ENCODE measurements at regions of chr11 and their contacts with region 1.

Region 1: DNA sequence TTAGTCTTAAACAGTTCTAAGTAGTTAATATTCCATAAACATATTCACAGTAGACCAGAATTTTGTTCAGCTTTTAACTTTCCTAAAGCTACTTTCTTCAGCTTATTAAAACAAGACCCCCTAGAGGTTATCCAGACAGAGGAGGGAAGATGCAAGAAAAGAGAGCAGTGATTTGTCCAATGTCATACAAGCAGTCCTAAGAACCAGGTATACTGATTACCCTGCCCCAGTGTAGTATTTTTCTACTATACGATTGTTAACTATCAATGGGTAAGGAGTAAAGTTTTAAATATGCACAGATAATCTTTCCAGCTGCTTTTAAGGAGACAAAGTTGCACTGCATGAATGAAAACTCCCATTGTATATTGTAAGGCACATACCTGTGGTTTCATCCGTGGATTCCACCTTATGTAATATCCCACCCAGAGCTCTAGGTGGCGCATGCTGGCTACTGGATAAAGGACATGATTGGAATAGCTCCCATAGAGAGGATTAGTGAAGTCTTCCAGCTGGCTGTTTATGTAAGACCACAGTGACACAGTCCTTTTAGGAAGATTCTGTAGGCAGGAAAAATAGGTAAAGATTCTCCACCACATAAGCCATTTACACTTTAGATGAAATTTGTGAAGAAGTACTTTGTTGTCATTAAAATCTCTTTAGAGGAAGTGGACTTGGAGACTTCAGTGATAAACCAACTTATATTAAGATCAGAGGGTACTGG is 45.6 kb downstream of the CEP57 start:
- DNase-seq: peak; percentile 63
- ATAC-seq: peak; percentile 99
- H3K4me3 ChIP-seq: no peak overlapping the region
- H3K27ac ChIP-seq: no peak overlapping the region
- H3K4me1 ChIP-seq: no peaks in the 10 kb centered on the region
- H3K27me3 ChIP-seq: no peaks in the 10 kb centered on the region
- CTCF ChIP-seq: peak; percentile 66 to 96 (median 83); a peak in 5 of 6 replicates
- POLR2A ChIP-seq: no peak
- RAD21 ChIP-seq: peak; percentile 76

Region 2: DNA sequence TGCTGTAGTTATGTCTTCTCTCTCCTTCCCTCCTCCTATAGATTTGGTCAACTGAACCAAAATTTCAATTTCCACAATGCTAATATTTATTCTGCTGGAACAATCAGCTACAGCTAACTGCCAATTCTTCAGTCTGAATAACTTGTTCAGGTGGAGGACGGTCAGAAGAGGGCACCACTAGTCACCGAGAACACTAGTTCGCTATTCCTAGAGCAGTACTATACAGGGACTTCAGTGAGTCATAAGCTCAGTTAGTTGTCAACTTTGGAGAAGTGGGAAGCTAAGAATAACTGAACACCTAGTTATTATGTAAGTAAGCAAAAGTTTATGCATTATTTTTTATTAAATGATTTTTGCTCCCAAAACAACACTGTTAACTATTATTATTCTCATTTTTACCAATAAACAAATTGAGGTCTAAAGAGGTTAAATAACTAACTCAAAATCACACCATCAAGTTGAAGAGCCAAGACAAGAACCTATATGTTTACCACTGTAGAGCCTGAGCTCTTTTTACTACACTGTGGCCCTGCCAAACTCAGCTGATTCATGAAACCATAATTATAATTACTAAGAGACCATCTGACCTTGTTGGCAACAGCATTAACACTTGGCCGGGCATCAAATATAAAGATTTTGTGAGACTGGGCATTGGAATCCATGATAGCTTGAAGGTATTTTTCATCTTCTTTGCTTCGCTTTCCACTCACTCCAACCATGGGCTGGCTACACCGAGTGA is 13.3 kb after region 1 on chr11:
- CTCF ChIA-PET with region 1: interaction called, 14 read pairs
- POLR2A ChIA-PET with region 1: no interaction called
- RAD21 ChIA-PET with region 1: no interaction called
- intact Hi-C with region 1: no loop called
- DNase-seq: peak; percentile 32
- ATAC-seq: peak; percentile 88
- H3K4me3 ChIP-seq: no peak overlapping the region
- H3K27ac ChIP-seq: no peak overlapping the region
- H3K4me1 ChIP-seq: no peaks in the 10 kb centered on the region
- H3K27me3 ChIP-seq: no peaks in the 10 kb centered on the region
- CTCF ChIP-seq: peak; percentile 39 to 60 (median 45); a peak in 5 of 6 replicates
- POLR2A ChIP-seq: no peak
- RAD21 ChIP-seq: peak; percentile 65

Region 3: DNA sequence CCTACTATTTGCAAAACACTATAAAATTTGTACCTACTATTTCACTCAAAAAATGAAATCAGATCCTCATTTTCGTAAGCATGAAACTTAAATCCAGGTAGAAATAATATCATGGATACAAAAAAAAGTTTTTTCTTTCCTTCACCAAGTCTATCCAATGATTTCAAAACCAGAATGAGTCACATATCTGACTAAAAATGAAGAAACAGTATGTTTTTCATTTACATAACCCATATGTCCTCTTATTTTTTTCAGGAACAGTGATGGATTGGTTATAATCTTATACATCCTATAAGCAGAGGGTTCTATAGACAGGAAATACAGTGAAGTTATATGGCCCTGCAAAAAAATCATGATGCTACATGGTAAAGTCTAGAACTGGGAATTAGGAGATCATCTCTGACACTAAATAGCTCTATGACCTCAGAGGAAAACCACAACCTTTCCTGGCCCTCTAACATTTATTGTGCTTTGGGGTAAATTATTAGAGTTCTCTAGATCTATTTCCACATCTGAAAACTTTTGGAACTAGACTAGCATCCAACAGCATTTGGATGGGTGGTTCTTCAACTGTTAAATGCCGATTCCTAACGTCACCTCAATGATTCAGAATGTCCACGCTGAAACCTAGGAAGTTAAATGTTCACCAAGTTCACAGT is 77.1 kb after region 1 on chr11:
- CTCF ChIA-PET with region 1: no interaction called
- POLR2A ChIA-PET with region 1: no interaction called
- RAD21 ChIA-PET with region 1: no interaction called
- intact Hi-C with region 1: no loop called
- DNase-seq: no peak
- ATAC-seq: no peak
- H3K4me3 ChIP-seq: no peak overlapping the region
- H3K27ac ChIP-seq: no peak overlapping the region
- H3K4me1 ChIP-seq: no peaks in the 10 kb centered on the region
- H3K27me3 ChIP-seq: no peaks in the 10 kb centered on the region
- CTCF ChIP-seq: no peak
- POLR2A ChIP-seq: no peak
- RAD21 ChIP-seq: no peak

Region 4: GRCh38 chr11:95968585-95968984 is 132.7 kb after region 1 on chr11:
- CTCF ChIA-PET with region 1: interaction called, 10 read pairs
- POLR2A ChIA-PET with region 1: no interaction called
- RAD21 ChIA-PET with region 1: no interaction called
- intact Hi-C with region 1: no loop called
- DNase-seq: no peak
- ATAC-seq: no peak
- H3K4me3 ChIP-seq: no peak overlapping the region
- H3K27ac ChIP-seq: no peak overlapping the region
- H3K4me1 ChIP-seq: no peaks in the 10 kb centered on the region
- H3K27me3 ChIP-seq: no peaks in the 10 kb centered on the region
- CTCF ChIP-seq: peak in 2 of 3 experiments; percentile 40 to 45; a peak in 4 of 6 replicates
- POLR2A ChIP-seq: no peak
- RAD21 ChIP-seq: peak; percentile 44

Region 5: DNA sequence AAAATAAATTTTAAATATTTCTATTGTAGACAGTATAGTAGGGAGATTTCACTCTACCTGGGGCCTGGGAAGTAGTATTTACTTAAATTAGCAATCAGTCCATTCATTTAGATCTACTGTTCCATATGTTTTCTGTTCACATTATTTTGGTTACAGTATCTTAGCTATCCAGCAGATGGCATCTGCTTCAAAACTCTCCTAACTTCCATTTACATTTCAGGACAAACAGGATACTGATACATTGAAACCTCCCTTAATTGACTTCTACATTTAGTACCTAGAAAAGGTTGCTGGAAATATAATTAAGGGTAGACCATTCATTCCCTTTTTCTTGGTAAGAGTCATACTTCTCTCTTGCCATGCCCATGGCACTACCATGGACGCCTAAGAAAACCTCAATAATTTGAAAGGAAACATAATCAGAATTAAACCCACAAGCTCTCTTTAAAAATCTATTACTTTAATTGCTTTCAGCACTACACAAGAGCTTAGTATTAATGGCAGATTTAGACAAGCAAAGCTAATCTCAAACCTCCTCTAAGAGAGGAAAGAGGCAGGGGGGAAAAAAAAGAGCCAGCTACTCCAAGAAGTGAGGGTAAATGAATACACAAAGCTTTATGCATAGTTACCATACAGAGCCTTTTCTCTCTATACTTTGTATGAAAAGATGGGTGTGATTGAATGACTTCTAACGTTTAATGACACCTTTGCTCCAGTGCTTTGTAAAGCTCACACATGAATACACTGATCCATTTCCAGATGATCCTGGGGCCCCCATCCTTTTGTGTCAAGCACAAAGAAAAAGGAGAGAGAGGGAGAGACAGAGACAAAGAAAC is 219.2 kb after region 1 on chr11:
- CTCF ChIA-PET with region 1: interaction called, 4 read pairs
- POLR2A ChIA-PET with region 1: no interaction called
- RAD21 ChIA-PET with region 1: no interaction called
- intact Hi-C with region 1: loop called (anchors 5 kb)
- DNase-seq: peak; percentile 27
- ATAC-seq: peak; percentile 60; the same call in 1 of the 2 replicates
- H3K4me3 ChIP-seq: no peak overlapping the region
- H3K27ac ChIP-seq: no peak overlapping the region
- H3K4me1 ChIP-seq: peaks cover 0 to 14% of the 10 kb centered on the region in 2 experiments; a peak in 3 of 4 replicates
- H3K27me3 ChIP-seq: no peaks in the 10 kb centered on the region
- CTCF ChIP-seq: peak; percentile 53 to 83 (median 65)
- POLR2A ChIP-seq: no peak
- RAD21 ChIP-seq: peak; percentile 78

Region 6: DNA sequence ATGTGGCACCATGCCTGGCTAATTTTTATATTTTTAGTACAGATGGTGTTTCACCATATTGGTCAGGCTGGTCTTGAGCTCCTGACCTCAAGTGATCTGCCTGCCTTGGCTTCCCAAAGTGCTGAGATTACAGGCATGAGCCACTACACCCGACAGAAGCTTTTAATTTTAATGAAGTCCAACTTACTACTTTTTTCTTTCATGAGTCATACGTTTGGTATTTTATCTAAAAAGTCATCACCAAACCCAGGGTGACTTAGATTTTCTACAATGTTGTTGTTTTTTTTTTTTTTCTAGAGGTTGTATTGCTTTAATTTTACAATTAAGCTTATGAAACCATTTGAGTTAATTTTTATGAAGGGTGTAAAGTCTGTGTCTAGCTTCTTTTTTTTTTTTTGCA is 588.8 kb after region 1 on chr11:
- CTCF ChIA-PET with region 1: interaction called, 29 read pairs
- POLR2A ChIA-PET with region 1: no interaction called
- RAD21 ChIA-PET with region 1: no interaction called
- intact Hi-C with region 1: loop called (anchors 2 kb)
- DNase-seq: no peak
- ATAC-seq: no peak
- H3K4me3 ChIP-seq: no peak overlapping the region
- H3K27ac ChIP-seq: no peak overlapping the region
- H3K4me1 ChIP-seq: 0 out of 4 replicates have a peak, but pooled peaks cover 0 to 3% of the 10 kb centered on the region in 2 experiments
- H3K27me3 ChIP-seq: no peaks in the 10 kb centered on the region
- CTCF ChIP-seq: no peak
- POLR2A ChIP-seq: no peak
- RAD21 ChIP-seq: no peak